Prostate gland (tissue), 2 donors: ENCODE measurements at regions of chr13 and their contacts with region 1.

Region 1: GRCh38 chr13:22801402-22802003 is 379.3 kb upstream of the SGCG start:
- DNase-seq: no peak
- H3K4me3 ChIP-seq: no peak overlapping the region
- H3K27ac ChIP-seq: no peak overlapping the region
- H3K4me1 ChIP-seq: no peaks in the 10 kb centered on the region
- H3K27me3 ChIP-seq: no peaks in the 10 kb centered on the region
- CTCF ChIP-seq: peak in 2 of 4 experiments; percentile 56 to 57
- POLR2A ChIP-seq: no peak

Region 2: DNA sequence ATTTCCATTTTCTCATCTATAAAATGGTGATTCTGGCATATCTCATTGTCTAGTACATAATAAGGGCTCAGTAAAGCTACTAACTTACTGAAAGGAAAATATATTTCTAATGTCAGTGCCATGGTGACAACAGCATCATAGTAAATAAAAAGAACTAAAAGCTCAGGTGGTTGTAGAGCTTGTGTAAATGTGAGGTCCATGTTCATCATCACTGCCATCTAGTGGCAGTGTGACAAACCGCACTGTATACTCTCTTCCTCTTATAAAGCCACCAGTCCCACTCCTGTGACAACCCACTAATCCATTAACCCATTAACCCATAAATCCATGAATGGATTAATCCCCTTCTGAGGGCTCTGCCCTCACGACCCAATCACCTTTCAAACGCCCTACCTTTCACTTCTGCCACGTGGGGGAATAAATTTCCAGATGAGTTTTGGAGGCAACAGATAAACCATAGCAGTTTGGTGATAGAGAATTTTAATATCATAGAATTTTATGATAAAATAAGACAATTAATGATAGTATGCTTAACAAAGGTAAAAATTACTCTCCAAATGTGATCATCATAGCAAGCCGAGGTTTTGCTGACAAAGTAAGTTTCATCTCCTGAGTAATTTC is 218.8 kb after region 1 on chr13:
- intact Hi-C with region 1: loop called (anchors 10 kb)
- DNase-seq: peak; percentile 33
- H3K4me3 ChIP-seq: no peak overlapping the region
- H3K27ac ChIP-seq: no peak overlapping the region
- H3K4me1 ChIP-seq: no peaks in the 10 kb centered on the region
- H3K27me3 ChIP-seq: no peaks in the 10 kb centered on the region
- CTCF ChIP-seq: peak; percentile 72 to 77 (median 74)
- POLR2A ChIP-seq: no peak